ENCODE measurements at regions of chr6 and their contacts with region 1.

Region 1: DNA sequence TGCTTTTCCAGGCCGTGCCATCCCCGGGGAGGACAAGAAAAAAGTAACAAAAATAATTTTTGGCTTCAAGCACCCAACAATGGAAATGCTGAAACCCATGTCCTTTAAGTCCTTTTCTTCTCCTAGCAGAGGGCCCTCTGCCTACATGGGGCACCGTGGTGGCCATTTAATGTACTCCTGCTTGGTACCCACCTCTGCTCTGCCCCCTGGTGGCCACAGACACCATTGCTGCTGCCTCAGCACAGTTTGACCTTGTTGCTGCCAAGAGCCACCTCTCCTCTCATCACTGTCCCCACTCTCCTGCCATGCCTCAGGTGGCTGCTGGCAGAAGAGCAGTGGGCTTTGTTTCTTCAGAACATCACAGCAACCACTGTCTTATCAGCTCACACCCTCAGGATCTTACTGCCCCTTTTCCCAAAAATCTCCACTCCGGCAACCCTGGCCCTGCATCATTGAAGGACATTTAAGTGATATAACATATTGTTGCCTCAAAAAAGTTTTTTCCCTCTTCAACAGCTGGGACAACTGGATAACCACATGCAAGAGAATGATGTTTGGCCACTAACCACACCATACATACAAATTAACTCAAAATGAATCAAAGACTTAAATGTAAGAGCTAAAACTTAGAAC is 12.9 kb upstream of the ARMC2 start:
- DNase-seq: peak; percentile 81 to 96 (median 90)
- H3K4me3 ChIP-seq: no peak overlapping the region
- H3K27ac ChIP-seq: no peak overlapping the region
- H3K4me1 ChIP-seq: peaks cover 0 to 4% of the 10 kb centered on the region in 2 donors
- H3K27me3 ChIP-seq: no peaks in the 10 kb centered on the region
- CTCF ChIP-seq: peak; percentile 94 to 99 (median 98)
- POLR2A ChIP-seq: no peak

Region 2: DNA sequence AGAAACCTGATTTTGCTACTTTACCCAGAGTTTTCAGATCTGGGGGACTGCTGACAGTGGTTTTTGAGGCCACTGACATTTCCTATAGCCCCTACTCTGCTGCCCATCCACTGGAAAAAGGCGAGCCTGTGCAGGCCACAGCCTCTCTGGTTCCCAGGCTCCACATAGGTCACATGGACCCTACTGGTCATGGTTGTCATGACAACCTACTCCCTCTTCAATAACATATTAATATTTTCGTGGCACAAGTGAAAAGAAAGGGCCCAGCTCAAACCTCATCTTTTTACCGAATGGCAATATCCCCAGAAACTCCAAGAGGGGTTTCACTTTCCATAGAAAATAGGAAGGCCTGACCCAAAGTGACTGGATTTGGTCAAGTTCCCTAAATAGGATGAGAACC is 285.6 kb before region 1 on chr6:
- intact Hi-C with region 1: loop called in 1 of 2 experiments (anchors 5 kb)
- DNase-seq: no peak
- H3K4me3 ChIP-seq: no peak overlapping the region
- H3K27ac ChIP-seq: no peak overlapping the region
- H3K4me1 ChIP-seq: no peaks in the 10 kb centered on the region
- H3K27me3 ChIP-seq: no peaks in the 10 kb centered on the region
- CTCF ChIP-seq: no peak
- POLR2A ChIP-seq: no peak

Region 3: DNA sequence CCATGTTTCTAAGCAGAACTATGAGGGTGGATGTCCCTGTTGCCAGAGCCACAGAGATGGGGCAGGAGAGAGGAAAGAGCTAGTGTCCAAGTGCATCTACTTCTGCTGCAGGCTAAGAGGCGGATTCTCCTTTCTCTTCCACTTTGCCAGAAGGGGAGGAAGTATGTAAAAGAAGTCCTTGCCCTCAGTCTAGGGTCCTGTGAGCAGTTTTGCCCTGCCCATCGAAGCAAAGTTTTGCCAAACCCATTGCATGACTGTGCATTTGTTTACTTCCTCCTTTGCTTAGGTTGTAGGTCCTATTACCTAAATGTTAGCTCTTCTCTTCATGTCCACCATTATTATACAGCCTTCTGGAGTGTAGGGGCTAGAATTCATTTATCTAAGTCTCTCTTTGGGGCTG is 93.3 kb before region 1 on chr6:
- intact Hi-C with region 1: no loop called
- DNase-seq: no peak
- H3K4me3 ChIP-seq: no peak overlapping the region
- H3K27ac ChIP-seq: no peak overlapping the region
- H3K4me1 ChIP-seq: peaks cover 0 to 5% of the 10 kb centered on the region in 2 donors
- H3K27me3 ChIP-seq: no peaks in the 10 kb centered on the region
- CTCF ChIP-seq: no peak
- POLR2A ChIP-seq: no peak

Region 4: DNA sequence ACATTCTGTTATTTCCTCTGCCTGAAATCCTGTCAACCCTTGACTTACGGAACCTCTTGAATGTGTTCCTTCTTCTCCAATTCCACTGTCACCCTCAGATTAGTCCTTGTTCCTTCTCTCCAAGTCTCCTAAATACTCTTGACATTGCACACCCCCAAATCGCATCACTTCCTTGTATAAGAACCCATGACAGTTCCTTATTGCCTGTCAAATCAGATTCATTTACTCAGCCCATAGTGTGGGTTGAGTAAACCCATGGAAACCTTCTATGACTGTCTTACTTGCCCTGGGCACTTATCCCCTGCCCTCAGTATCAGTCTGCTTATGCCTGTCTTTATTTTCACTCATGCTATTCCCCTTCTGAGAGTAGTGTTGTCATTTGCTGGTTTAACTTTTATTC is 53.4 kb after region 1 on chr6:
- intact Hi-C with region 1: loop called in 1 of 2 experiments (anchors 5 kb)
- DNase-seq: peak in 2 of 7 donors; percentile 23 to 35
- H3K4me3 ChIP-seq: no peak overlapping the region
- H3K27ac ChIP-seq: no peak overlapping the region
- H3K4me1 ChIP-seq: peaks cover 7 to 11% of the 10 kb centered on the region in 2 donors
- H3K27me3 ChIP-seq: no peaks in the 10 kb centered on the region
- CTCF ChIP-seq: no peak
- POLR2A ChIP-seq: no peak

Region 5: DNA sequence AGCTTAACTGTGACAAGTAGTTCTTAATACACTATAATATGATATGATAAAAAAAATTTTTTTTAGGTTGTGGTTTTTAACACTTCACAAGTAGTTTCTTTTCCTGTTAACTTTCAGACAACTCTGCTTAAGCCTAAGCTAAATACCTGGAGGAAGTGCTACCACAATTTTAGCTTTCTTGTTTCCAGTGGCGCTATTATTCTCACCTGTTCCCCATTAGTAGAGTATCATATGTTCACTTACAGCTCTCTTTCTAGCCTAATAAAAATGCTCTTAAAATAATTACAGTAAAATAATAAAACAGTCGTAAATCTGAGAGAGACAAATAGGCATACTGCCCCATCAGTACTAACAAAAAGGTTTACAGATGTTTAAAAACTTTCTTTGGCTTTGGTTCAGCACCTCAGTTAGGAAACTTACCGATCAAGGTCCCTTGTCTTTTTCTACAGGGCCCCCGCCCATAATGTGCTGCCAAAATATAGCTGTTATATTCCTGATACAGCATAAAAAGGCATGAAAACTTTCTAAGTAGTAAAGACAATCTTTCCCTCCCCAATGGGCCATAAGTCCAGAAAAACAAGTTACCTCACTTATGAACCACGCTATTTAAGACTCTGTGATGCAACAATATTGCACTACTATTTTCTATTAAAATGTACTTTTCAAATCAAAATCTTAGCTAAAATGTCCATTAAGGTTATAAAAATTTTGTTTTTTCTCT is 201.4 kb after region 1 on chr6:
- intact Hi-C with region 1: no loop called
- DNase-seq: no peak
- H3K4me3 ChIP-seq: no peak overlapping the region
- H3K27ac ChIP-seq: no peak overlapping the region
- H3K4me1 ChIP-seq: peaks cover 0 to 5% of the 10 kb centered on the region in 2 donors
- H3K27me3 ChIP-seq: no peaks in the 10 kb centered on the region
- CTCF ChIP-seq: no peak
- POLR2A ChIP-seq: no peak